ENCODE measurements at regions of chr2 and their contacts with region 1.

Region 1: DNA sequence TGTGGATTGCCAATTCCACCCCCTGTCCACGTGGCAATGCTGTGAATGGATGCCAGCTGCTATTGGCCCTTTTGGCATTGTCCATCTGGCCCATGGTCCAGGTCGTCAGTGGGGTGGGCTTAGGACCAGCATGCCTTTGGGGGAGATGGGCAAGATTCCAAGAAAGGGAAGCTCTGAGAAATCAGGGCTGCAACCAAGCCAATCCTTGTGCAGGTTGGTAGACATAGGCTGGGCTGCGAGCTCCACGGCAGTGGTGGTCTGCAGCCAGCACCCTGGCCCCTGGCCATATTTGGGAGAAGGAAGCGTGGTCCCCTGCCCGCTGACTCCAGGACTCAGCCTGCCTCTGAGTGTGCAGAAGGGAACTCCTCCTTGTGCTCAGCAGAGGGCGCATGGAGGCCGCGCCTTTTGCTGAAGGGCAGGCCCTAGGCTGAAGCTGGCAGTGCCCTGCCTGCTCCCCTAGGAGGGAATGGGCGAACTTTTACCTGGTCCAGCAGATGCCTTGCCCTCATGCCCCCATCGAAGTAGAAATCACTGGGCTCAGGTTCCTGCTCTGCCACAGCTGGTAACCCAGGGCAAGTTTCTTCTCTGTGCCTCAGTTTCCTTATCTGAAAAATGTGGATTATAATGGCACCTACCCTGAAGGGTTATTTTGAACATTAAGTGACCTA is 5.4 kb downstream of the SPR start:
- DNase-seq: peak; percentile 48 to 81 (median 76)
- ATAC-seq: peak; percentile 59 to 85 (median 79)
- H3K4me3 ChIP-seq: no peak overlapping the region
- H3K27ac ChIP-seq: no peak overlapping the region
- H3K4me1 ChIP-seq: peaks cover 3 to 37% (median 27%) of the 10 kb centered on the region in 12 donors
- H3K27me3 ChIP-seq: peaks cover 0 to 17% (median 9%) of the 10 kb centered on the region in 9 donors
- CTCF ChIP-seq: peak; percentile 56 to 82 (median 71)
- POLR2A ChIP-seq: no peak

Region 2: DNA sequence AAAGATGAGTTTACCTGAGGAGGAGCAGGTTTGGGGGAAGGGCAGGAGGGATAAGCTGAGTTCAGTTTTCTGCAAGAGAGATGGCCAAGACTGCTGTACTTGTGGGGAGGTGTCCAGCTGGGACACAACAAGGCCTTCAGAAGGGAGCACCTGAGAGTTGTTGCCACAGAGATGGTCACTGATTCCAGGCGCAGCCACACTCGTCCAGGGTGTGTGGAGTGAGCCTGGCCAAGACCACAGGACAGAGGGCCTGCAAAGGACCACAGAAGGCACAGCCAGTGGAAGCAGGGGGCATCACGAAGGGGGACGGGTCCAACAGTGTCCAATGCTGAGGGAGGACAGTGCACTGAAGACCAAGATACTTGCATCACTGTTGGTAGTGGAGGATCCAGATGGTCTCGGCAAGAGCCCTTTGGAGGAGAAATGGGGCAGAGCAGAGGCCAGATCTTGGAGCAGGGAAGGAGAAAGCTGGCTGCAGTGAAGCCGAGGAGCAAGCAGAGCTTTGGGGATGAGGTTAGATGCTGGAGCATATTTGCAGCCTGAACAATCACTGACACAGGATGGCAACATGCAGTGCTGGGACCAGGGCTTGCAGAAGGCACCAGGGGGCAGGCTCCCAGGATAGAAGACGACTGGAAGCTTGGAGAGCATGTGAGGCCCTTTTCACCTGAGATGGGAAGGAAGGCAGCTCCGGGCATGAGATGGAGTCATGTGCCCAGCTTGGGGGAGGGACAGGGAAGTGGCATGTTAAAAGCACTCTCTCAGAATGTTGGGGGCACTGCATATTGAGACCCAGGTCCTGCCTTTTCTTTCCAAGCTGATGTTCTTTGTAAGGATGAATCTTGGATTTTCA is 958.9 kb before region 1 on chr2:
- intact Hi-C with region 1: no loop called
- DNase-seq: peak in 1 of 5 donors; percentile 3
- ATAC-seq: peak in 1 of 4 donors; percentile 8
- H3K4me3 ChIP-seq: no peak overlapping the region
- H3K27ac ChIP-seq: no peak overlapping the region
- H3K4me1 ChIP-seq: peaks cover 0 to 12% (median 0%) of the 10 kb centered on the region in 12 donors
- H3K27me3 ChIP-seq: no peaks in the 10 kb centered on the region
- CTCF ChIP-seq: peak in 6 of 12 donors; percentile 7 to 34 (median 16)
- POLR2A ChIP-seq: no peak

Region 3: GRCh38 chr2:72233211-72233610 is 659.4 kb before region 1 on chr2:
- intact Hi-C with region 1: no loop called
- DNase-seq: no peak
- ATAC-seq: no peak
- H3K4me3 ChIP-seq: no peak overlapping the region
- H3K27ac ChIP-seq: no peak overlapping the region
- H3K4me1 ChIP-seq: peaks cover 0 to 13% (median 6%) of the 10 kb centered on the region in 12 donors
- H3K27me3 ChIP-seq: no peaks in the 10 kb centered on the region
- CTCF ChIP-seq: no peak
- POLR2A ChIP-seq: no peak

Region 4: GRCh38 chr2:72951303-72952095 is 58.9 kb after region 1 on chr2:
- intact Hi-C with region 1: no loop called
- DNase-seq: peak in 2 of 5 donors; percentile 15 to 33
- ATAC-seq: no peak
- H3K4me3 ChIP-seq: no peak overlapping the region
- H3K27ac ChIP-seq: no peak overlapping the region
- H3K4me1 ChIP-seq: peaks cover 0 to 8% (median 0%) of the 10 kb centered on the region in 12 donors
- H3K27me3 ChIP-seq: no peaks in the 10 kb centered on the region
- CTCF ChIP-seq: no peak
- POLR2A ChIP-seq: no peak

Region 5: DNA sequence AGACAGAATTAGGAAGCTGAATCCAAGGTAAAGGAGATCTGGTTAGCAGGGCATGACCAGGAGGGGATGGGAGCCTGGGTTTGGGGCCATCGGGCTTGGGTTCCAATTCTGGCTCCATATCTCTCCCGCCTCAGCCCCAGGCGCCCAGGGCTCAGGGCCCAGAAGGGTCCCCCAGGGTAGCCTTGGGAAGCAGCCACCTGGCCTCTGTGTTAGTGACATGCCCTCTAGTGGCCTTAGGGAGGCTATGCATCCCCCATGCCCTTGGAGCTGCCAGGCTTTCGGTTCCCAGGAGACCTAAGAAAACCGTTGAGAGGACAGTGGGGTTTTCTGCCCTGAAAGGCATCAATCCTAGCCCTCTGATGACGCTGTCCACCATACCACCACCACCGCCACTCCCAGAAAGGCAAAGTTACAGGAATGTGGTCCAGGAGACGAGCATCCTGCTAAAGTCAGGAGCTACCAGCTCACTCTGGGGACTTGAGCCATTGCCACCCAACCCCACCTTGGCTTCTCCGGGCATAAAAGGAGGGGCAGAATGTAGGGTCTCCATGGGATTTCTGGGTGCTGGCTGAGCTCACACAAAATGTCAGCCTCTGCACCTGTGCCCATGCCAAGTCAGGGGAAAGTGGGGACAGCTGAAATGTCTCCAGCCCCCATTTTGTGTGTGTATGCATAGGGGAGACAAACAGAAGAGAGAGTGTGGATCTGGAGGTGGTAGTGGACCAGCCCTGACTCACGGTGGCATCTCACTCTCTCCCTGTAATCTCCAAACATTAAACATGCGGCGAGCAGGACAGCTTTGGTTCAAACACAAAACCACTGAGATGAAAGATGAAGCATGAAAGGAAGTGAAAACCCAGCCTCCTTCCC is 81.2 kb after region 1 on chr2:
- intact Hi-C with region 1: loop called (anchors 1 to 10 kb)
- DNase-seq: peak in 3 of 5 donors; percentile 35 to 50 (median 47)
- ATAC-seq: peak; percentile 46 to 86 (median 82)
- H3K4me3 ChIP-seq: no peak overlapping the region
- H3K27ac ChIP-seq: no peak overlapping the region
- H3K4me1 ChIP-seq: peaks cover 0 to 7% (median 0%) of the 10 kb centered on the region in 12 donors
- H3K27me3 ChIP-seq: no peaks in the 10 kb centered on the region
- CTCF ChIP-seq: peak; percentile 56 to 78 (median 72)
- POLR2A ChIP-seq: no peak

Region 6: GRCh38 chr2:72979896-72980295 is 87.3 kb after region 1 on chr2:
- intact Hi-C with region 1: loop called in 3 of 10 experiments (anchors 2 to 10 kb)
- DNase-seq: peak in 1 of 5 donors; percentile 21
- ATAC-seq: peak in 1 of 4 donors; percentile 20
- H3K4me3 ChIP-seq: no peak overlapping the region
- H3K27ac ChIP-seq: no peak overlapping the region
- H3K4me1 ChIP-seq: peaks cover 0 to 48% (median 25%) of the 10 kb centered on the region in 12 donors
- H3K27me3 ChIP-seq: no peaks in the 10 kb centered on the region
- CTCF ChIP-seq: no peak
- POLR2A ChIP-seq: no peak

Region 7: GRCh38 chr2:73071360-73072133 is 178.9 kb after region 1 on chr2 and contains the start of gene SFXN5:
- intact Hi-C with region 1: loop called in 3 of 10 experiments (anchors 5 kb)
- DNase-seq: peak; percentile 98 to 100 (median 99)
- ATAC-seq: peak; percentile 96 to 98 (median 96)
- H3K4me3 ChIP-seq: peak within 1 kb of the TSS; percentile 57 to 99 (median 87)
- H3K27ac ChIP-seq: peak within 1 kb of the TSS; percentile 74 to 98 (median 93)
- H3K4me1 ChIP-seq: peaks cover 3 to 39% (median 21%) of the 10 kb centered on the region in 12 donors
- H3K27me3 ChIP-seq: no peaks in the 10 kb centered on the region
- CTCF ChIP-seq: peak in 8 of 12 donors; percentile 13 to 50 (median 30)
- POLR2A ChIP-seq: no peak
- total RNA-seq, gene SFXN5: 6.0 to 12.5 (median 9.1) TPM

Region 8: DNA sequence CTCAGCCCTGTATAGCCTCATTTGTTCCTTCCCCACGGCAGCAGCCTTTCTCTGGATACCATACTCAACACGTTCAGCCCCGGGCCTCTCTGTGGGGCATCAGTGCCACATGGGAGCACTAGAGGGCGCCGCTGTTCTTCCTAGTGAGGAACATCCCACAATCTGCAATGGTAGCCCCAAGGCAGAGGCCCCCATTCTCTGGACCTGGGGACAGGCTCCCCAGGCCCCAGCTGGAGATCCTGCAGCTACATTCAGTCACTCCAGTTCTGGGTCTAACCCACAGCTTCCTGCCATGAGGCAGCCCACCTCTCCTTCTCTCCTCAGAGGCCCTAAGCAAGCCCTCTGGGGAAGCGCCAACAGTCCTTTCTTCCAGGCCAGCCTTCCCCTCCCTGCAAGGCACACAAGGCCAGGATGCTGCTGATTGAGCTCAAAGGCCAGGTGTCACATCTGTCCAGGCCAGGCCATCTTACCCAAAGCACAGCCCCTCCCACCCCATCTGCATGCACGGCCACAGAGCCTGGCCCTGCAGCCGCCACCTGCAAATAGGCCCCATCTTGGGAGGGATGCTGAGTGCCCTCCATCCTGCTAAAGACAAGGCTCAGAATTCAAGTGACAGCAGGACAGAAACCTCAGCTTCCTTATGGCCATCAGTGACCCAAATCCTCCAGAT is 193.2 kb after region 1 on chr2:
- intact Hi-C with region 1: loop called in 6 of 10 experiments (anchors 5 to 10 kb)
- DNase-seq: peak; percentile 73 to 89 (median 80)
- ATAC-seq: peak; percentile 28 to 80 (median 68)
- H3K4me3 ChIP-seq: no peak overlapping the region
- H3K27ac ChIP-seq: no peak overlapping the region
- H3K4me1 ChIP-seq: peaks cover 0 to 42% (median 18%) of the 10 kb centered on the region in 12 donors
- H3K27me3 ChIP-seq: no peaks in the 10 kb centered on the region
- CTCF ChIP-seq: peak; percentile 88 to 99 (median 94)
- POLR2A ChIP-seq: no peak

Region 9: DNA sequence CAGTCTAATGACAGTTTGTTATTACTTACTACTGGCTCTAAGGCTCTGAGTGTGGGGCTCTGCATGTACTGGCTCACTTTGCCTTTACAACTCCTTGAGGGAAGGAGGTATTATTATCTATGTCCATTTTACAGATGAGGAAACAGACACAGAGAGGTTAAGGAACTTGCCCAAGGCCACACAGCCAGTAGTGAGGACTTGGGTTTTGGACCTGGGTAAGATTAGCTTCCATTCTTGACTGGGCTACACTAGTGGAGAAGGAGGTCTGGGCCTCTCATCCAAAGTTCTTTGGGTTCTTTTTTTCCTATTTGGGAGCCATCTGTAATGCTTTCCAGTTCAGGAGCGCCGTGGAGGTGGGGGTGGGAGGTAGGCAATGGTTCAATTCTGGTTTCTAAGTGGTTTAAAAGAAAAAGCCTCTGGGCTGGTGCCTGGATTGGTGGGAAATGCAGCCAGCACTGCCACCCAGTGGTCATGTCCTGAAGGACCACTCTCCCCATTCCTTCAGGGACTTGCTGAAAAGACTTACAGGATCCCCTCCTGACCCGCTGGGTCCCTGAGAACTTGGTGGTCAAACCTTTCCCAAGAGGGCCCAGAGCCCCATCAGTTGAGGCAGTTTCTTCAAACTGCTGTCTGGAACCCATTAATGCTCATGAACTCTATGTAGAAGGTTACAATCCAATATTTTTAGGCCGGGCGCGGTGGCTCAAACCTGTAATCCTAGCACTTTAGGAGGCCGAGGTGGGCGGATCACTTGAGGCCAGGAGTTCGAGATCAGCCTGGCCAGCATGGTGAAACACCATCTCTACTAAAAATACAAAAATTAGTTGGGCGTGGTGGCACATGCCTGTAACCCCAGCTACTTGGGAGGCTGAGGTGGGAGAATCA is 271.1 kb after region 1 on chr2:
- intact Hi-C with region 1: loop called (anchors 1 to 5 kb)
- DNase-seq: peak; percentile 44 to 74 (median 52)
- ATAC-seq: peak; percentile 42 to 94 (median 80)
- H3K4me3 ChIP-seq: no peak overlapping the region
- H3K27ac ChIP-seq: no peak overlapping the region
- H3K4me1 ChIP-seq: no peaks in the 10 kb centered on the region
- H3K27me3 ChIP-seq: peaks cover 0 to 7% (median 0%) of the 10 kb centered on the region in 9 donors
- CTCF ChIP-seq: peak; percentile 74 to 90 (median 84)
- POLR2A ChIP-seq: no peak

Measured in heart left ventricle (tissue), 16 donors.